GM10248 (cell line): ENCODE measurements at regions of chr10 and their contacts with region 1.

Region 1: DNA sequence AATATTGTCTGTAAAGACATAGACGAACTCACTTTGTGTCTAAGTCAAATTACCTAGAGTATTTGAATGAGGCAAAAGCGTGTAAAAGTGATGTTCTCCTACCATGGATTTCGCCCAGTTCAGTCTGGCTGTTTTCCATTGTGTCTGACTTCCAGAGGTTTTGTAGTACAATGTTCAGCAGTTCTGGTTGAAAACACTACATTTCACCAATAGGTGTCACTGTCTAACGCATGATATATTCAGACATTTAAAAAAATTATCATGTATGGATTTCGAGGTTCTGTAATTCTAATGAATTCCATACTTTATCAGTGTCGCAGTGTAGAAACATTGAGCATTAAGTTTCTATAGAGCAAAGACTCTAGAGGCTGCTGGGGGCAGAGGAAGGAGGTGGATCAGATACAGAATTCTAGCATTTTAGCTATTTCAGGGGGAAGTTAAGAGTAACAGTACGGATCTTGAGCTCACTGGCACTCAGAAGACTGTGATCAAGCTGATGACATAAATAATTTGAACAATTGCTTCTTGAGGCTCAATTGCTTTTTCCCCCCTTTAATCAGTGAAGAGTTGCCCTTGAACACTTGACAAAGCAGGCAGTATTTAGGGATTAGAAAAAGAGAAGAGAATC is 196.9 kb upstream of the RHOBTB1 start:
- DNase-seq: no peak
- CTCF ChIP-seq: peak; percentile 46

Region 2: GRCh38 chr10:60778214-60779029 is 362.5 kb before region 1 on chr10 and contains the start of gene CDK1:
- CTCF ChIA-PET with region 1: no interaction called
- POLR2A ChIA-PET with region 1: no interaction called
- DNase-seq: peak; percentile 97
- CTCF ChIP-seq: no peak

Region 3: DNA sequence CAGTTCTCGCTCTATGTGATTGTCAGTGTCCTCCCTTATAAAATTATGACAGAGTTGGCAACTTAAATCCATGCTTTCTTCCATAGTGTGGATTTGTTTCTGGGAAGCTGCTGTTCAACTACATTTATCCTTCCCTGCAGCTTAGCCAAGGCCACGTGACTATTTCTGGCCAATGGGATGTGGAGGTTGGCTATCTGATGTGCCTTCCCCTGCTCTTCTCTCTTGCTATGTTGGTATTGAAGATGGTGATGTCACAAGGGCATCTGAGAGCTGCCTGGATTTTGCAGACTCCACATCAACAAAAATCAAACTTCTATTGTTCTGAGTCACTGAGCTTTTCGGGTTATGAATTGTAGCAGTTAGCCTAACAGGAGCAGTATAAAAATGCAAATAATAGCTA is 32.0 kb before region 1 on chr10:
- CTCF ChIA-PET with region 1: no interaction called
- POLR2A ChIA-PET with region 1: no interaction called
- DNase-seq: no peak
- CTCF ChIP-seq: no peak

Region 4: GRCh38 chr10:61153771-61154170 is 12.9 kb after region 1 on chr10:
- CTCF ChIA-PET with region 1: interaction called, 34 read pairs
- POLR2A ChIA-PET with region 1: no interaction called
- DNase-seq: no peak
- CTCF ChIP-seq: no peak

Region 5: DNA sequence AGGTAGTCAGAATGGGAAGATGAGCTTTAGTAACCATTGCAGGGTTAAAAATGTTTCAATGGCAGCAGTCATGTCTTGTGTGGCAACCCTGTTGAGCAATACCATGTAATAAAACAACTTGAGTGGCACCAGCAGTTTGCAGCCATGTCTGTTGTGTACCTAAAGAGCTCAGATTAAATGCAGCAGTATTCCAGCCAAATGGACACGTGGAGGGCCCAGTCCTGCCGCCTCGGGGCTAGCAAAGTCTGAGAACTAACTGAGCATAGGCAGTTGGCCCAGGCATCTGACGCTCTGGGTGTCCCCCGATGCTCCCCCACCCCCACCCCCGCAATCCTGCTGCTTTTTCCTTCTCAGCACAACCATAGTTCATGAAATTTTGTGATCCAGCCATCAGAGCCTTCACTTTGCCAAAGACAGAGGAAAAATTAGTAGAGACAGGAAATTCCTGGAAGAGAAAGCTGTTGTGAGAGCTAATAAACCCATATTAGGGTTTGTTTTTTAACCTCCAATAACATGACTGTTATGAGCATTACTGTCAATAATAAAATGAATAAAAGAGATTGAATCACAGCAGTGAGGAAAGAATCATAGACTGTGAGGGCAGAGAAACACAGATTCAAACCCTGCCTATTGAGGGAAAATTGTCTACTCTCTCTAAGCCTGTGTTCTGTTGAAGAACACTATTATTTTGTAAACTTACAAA is 23.7 kb after region 1 on chr10:
- CTCF ChIA-PET with region 1: interaction called, 13 read pairs
- POLR2A ChIA-PET with region 1: no interaction called
- DNase-seq: no peak
- CTCF ChIP-seq: no peak

Region 6: DNA sequence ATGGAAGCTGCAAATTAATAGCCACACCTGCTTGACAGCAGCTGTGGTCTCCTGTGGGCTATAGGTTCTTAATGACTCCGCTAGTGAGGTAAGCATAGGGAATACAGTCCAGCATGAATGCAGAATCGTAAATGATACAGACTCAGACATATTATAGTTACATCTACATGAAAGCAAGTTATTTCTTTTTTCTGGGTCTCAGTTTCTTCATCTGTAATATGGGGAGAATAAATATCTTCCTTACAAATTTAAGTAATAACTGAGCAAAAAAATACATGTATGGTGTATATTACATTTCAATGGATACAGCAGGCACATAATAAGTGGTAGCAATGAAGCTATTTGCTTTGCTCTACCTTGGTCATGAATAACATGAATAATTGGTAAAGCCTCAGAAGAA is 49.0 kb after region 1 on chr10:
- CTCF ChIA-PET with region 1: interaction called, 17 read pairs
- POLR2A ChIA-PET with region 1: no interaction called
- DNase-seq: no peak
- CTCF ChIP-seq: no peak